ENCODE measurements at regions of chr17 and their contacts with region 1.

Region 1: GRCh38 chr17:68771867-68772515 is 170.8 kb upstream of the FAM20A start:
- DNase-seq: peak; percentile 81
- ATAC-seq: peak; percentile 69
- H3K4me3 ChIP-seq: peak overlapping the region; percentile 65
- H3K27ac ChIP-seq: no peak overlapping the region
- H3K4me1 ChIP-seq: peaks cover 13% of the 10 kb centered on the region
- H3K27me3 ChIP-seq: no peaks in the 10 kb centered on the region
- CTCF ChIP-seq: peak; percentile 88

Region 2: GRCh38 chr17:69047368-69048263 is 275.6 kb after region 1 on chr17:
- CTCF ChIA-PET with region 1: no interaction called
- POLR2A ChIA-PET with region 1: no interaction called
- intact Hi-C with region 1: loop called (anchors 10 kb)
- DNase-seq: no peak
- ATAC-seq: peak; percentile 80
- H3K4me3 ChIP-seq: no peak overlapping the region
- H3K27ac ChIP-seq: no peak overlapping the region
- H3K4me1 ChIP-seq: no peaks in the 10 kb centered on the region
- H3K27me3 ChIP-seq: peaks cover 30% of the 10 kb centered on the region; the same call in 1 of the 2 replicates
- CTCF ChIP-seq: no peak

Region 3: DNA sequence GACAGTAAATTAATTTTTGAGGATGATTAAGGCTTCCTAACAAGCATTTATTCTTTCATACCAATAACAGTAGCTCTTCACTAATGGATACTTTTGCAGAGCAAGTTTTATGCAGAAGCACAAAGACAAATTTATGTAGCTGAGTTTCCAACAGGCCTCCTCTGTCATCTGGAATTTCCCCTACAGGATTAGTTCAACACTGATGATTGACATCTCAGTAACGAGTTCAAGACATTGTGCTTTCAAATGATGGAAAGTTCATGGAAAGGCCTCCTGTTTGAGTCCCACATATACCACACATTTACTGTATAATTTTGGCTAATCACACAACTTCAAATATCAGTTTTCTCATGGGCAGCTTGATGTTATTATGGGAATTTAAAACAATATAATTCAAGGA is 416.1 kb after region 1 on chr17:
- CTCF ChIA-PET with region 1: interaction called, 3 read pairs
- POLR2A ChIA-PET with region 1: no interaction called
- intact Hi-C with region 1: loop called (anchors 5 kb)
- DNase-seq: no peak
- ATAC-seq: no peak
- H3K4me3 ChIP-seq: no peak overlapping the region
- H3K27ac ChIP-seq: no peak overlapping the region
- H3K4me1 ChIP-seq: no peaks in the 10 kb centered on the region
- H3K27me3 ChIP-seq: no peaks in the 10 kb centered on the region
- CTCF ChIP-seq: no peak

Region 4: DNA sequence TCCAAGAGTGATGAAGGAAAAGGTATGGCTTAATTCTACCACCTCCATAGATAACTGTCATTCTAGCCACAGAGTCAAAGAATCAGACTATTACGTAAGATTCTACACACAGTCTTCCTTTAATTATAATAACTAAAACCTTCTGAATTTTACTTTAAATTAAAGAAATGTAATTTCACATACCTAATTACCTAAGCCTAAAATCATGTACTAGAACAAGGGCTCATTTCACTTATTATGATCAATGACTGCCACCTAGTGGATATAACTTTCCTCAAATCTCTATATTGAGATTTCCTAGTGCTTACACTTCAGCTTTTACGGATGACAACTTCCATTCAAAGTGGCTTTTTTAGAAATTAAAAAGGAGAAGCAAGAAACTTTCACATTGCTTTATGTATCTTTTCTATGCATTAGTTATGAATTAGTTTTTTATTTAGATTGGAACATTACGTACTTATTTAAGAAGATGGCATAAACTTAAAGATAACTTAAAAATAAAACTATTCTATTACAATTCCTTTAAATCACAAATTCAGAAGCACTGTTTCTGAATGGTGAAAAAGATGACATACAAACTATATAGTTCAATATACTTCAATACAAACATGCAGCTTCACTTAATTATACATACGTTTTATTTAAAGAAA is 474.9 kb after region 1 on chr17:
- CTCF ChIA-PET with region 1: interaction called, 9 read pairs
- POLR2A ChIA-PET with region 1: no interaction called
- intact Hi-C with region 1: loop called (anchors 1 kb)
- DNase-seq: peak; percentile 81
- ATAC-seq: peak; percentile 70
- H3K4me3 ChIP-seq: no peak overlapping the region
- H3K27ac ChIP-seq: no peak overlapping the region
- H3K4me1 ChIP-seq: no peaks in the 10 kb centered on the region
- H3K27me3 ChIP-seq: no peaks in the 10 kb centered on the region
- CTCF ChIP-seq: peak; percentile 93

Measured in PC-3 (cell line).